Activated CD4-positive, alpha-beta memory T cell treated with anti-CD3 and anti-CD28 coated beads for 36 hours (primary cell): ENCODE measurements at regions of chr11 and their contacts with region 1.

Region 1: DNA sequence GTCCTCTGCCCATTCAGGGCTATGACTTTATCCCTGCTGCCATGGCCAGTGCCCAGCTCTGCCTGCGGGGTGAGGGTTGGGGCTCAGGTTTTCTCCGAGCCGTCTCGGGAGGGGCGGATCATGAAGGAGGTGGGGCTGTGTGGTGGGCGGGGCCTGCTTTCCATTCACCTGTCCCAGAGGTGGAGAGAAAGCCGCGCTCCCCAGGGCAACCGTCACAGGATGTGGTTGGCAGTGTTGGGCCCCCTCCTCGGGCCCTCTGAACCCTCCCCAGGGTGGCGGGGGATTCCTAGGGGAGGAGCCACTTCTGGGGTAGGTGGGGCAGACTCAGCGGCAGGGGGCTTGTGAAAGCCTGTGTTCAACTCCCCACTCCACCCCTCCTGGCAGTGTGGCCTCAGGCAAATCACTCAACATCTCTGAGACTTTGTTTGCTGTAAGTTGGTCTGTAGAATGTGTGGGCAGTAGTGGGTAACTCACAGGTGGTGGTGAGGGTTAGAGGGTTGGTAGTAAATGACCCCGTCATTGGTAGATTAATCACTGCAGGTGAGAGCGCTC is 50.3 kb downstream of the CD6 start:
- DNase-seq: peak; percentile 94
- H3K4me3 Mint-ChIP-seq: peak overlapping the region; percentile 75
- H3K27ac Mint-ChIP-seq: peak overlapping the region; percentile 99
- H3K4me1 Mint-ChIP-seq: peaks cover 89% of the 10 kb centered on the region
- H3K27me3 Mint-ChIP-seq: no peaks in the 10 kb centered on the region

Region 2: DNA sequence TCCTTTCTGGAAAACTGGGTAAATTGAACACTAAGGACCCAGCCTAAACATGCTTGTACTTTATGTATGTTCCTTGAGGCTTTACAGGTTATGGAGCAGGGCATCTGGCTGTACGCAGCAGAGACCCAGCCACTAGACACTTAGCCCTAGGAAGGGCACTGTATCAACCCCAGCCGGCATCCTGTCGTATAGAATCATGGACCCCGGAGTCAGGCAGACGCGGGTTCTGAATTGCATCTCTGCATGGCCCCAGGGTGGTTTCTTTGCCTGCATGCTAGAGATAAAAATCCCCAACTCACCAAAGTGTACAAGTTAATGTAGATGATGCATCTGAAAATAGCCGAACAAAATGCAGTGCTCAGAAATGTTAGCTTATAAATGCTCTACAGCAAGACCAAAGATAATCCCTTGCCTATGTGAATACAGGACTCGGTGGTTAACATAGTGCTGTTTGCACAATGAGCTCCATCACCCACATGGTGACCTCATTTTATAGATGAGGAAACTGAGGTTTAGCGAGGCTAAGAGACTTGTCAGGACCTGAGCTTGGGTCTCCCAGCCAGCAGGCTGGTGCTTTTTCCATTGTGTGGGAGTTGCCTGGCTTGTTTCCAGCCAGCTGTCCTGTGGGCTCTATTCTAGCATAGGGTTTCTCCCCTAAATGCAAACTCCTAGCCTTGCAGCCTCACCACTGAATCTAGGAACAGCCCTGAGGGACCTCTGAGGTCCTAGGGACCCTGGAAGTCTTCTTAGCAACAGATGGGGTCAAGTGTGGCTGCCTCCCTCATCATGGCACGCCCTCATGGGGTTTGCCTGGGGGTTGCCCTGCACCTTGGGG is 43.0 kb before region 1 on chr11:
- CTCF ChIA-PET with region 1: no interaction called
- POLR2A ChIA-PET with region 1: interaction called, 36 read pairs
- intact Hi-C with region 1: no loop called
- DNase-seq: peak; percentile 92
- H3K4me3 Mint-ChIP-seq: peak overlapping the region; percentile 95
- H3K27ac Mint-ChIP-seq: peak overlapping the region; percentile 99
- H3K4me1 Mint-ChIP-seq: peaks cover 71% of the 10 kb centered on the region
- H3K27me3 Mint-ChIP-seq: no peaks in the 10 kb centered on the region

Region 3: GRCh38 chr11:60992842-60993409 is 28.8 kb before region 1 on chr11:
- CTCF ChIA-PET with region 1: interaction called, 3 read pairs
- POLR2A ChIA-PET with region 1: interaction called, 21 read pairs
- intact Hi-C with region 1: loop called (anchors 1 kb)
- DNase-seq: peak; percentile 19
- H3K4me3 Mint-ChIP-seq: peak overlapping the region; percentile 68
- H3K27ac Mint-ChIP-seq: peak overlapping the region; percentile 97
- H3K4me1 Mint-ChIP-seq: peaks cover 81% of the 10 kb centered on the region
- H3K27me3 Mint-ChIP-seq: no peaks in the 10 kb centered on the region

Region 4: DNA sequence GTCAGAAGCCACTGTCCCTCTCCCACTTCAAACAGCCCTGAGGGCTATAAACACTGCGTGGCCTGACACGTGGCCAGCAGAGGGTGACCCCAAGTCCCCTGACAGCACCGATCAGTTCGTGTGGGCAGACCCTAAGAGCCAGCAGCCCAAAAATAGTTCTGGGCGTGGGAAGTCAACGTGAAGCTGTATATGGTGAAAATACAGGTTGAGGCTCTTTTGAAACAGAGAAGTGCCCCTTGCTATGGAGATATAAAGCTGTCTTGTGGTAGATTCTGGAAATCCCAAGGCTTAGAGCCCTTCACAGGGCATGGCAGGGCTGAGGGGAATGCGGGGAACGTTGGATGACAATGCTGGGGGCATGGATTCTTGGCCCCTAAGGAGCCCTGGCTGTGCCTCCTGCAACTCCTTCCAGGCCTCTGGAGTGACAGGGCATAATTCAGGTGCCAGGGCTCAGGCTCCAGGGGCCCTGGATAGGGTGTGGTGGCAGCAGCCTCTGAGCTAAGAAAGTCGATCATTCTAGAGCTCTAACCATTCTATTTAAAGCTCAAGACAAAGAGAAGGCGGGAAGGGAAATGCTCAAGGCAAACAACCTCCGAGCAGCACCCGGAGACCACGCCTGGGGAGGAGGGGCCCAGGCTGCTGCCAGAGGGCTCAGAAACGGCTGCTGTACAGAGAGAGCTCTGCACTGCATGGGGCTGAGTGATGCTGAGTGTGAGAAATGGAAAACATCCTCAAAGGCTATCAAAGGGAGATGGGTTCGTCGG is 20.2 kb after region 1 on chr11:
- CTCF ChIA-PET with region 1: interaction called, 6 read pairs
- POLR2A ChIA-PET with region 1: interaction called, 61 read pairs
- intact Hi-C with region 1: no loop called
- DNase-seq: peak; percentile 92
- H3K4me3 Mint-ChIP-seq: peak overlapping the region; percentile 68
- H3K27ac Mint-ChIP-seq: peak overlapping the region; percentile 96
- H3K4me1 Mint-ChIP-seq: peaks cover 71% of the 10 kb centered on the region
- H3K27me3 Mint-ChIP-seq: no peaks in the 10 kb centered on the region

Region 5: GRCh38 chr11:61091373-61092279 is 69.9 kb after region 1 on chr11:
- CTCF ChIA-PET with region 1: interaction called, 4 read pairs
- POLR2A ChIA-PET with region 1: interaction called, 17 read pairs
- intact Hi-C with region 1: no loop called
- DNase-seq: peak; percentile 85
- H3K4me3 Mint-ChIP-seq: peak overlapping the region; percentile 96
- H3K27ac Mint-ChIP-seq: peak overlapping the region; percentile 99
- H3K4me1 Mint-ChIP-seq: peaks cover 72% of the 10 kb centered on the region
- H3K27me3 Mint-ChIP-seq: no peaks in the 10 kb centered on the region